Activated CD8-positive, alpha-beta T cell treated with anti-CD3 and anti-CD28 coated beads for 36 hours (primary cell): ENCODE measurements at regions of chr2 and their contacts with region 1.

Region 1: GRCh38 chr2:105919826-105920225 is 175.1 kb downstream of the NCK2 start:
- DNase-seq: peak; percentile 69
- ATAC-seq: peak; percentile 66
- H3K4me3 Mint-ChIP-seq: no peak overlapping the region
- H3K27ac Mint-ChIP-seq: no peak overlapping the region
- H3K4me1 Mint-ChIP-seq: peaks cover 45% of the 10 kb centered on the region
- H3K27me3 Mint-ChIP-seq: no peaks in the 10 kb centered on the region
- CTCF ChIP-seq: no peak

Region 2: GRCh38 chr2:105907184-105907583 is 12.6 kb before region 1 on chr2:
- CTCF ChIA-PET with region 1: interaction called, 10 read pairs
- POLR2A ChIA-PET with region 1: no interaction called
- intact Hi-C with region 1: no loop called
- DNase-seq: no peak
- ATAC-seq: no peak
- H3K4me3 Mint-ChIP-seq: no peak overlapping the region
- H3K27ac Mint-ChIP-seq: no peak overlapping the region
- H3K4me1 Mint-ChIP-seq: peaks cover 43% of the 10 kb centered on the region
- H3K27me3 Mint-ChIP-seq: no peaks in the 10 kb centered on the region
- CTCF ChIP-seq: no peak